ENCODE measurements at regions of chr4 and their contacts with region 1.

Region 1: DNA sequence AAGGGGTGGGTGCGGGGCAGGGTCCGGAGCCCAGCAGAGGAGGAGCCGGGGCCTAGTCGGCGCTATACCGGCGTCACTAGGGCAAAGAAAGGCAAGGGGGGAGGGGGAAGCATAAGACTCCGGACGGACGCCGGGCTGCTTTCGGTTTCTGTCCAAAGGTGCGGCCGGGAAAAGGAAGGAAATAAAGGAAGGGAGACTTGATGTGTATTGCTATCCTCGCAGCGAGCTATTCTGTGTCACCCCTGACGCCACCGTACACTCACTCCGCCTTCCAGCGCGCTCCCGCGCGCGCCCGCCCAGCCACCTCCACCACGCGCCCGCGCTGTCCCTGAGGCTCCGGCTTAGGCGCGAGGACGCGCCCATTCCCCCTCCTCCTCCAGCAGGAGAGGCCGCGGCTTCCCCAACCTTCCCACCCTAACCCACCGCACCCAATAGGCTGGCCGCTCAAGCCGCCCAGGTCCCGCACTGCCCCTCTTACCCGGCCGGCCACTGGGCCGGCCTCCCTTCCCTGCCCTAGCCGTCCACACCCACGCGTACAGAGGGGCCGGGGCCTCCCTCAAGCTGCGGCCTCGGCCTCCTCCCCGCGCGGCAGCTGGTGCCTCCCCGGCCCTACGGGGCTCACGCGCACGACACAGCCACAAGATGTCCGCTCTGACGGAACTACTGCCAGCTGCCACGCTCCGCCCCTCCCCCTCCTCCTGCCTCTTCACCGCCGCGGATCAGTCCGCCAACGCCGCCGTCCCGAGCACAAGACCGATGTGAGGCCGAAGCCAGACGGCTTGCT is at the start of gene UBE2D3:
- DNase-seq: peak; percentile 92
- H3K4me3 ChIP-seq: peak within 1 kb of the TSS; percentile 82 to 97 (median 89)
- H3K27ac ChIP-seq: peak within 1 kb of the TSS; percentile 98
- H3K4me1 ChIP-seq: peaks cover 32% of the 10 kb centered on the region
- H3K27me3 ChIP-seq: no peaks in the 10 kb centered on the region
- CTCF ChIP-seq: peak in 1 of 2 donors; percentile 15
- POLR2A ChIP-seq: peak; percentile 86
- total RNA-seq, gene UBE2D3: 279 and 288 TPM in 2 replicates

Region 2: GRCh38 chr4:102500696-102501446 is 326.2 kb before region 1 on chr4 and contains the start of gene NFKB1:
- CTCF ChIA-PET with region 1: no interaction called
- POLR2A ChIA-PET with region 1: no interaction called
- dilution Hi-C with region 1: no loop called
- intact Hi-C with region 1: loop called (anchors 2 kb)
- DNase-seq: peak; percentile 81
- H3K4me3 ChIP-seq: peak within 1 kb of the TSS; percentile 83 to 93 (median 88)
- H3K27ac ChIP-seq: peak within 1 kb of the TSS; percentile 90
- H3K4me1 ChIP-seq: peaks cover 22% of the 10 kb centered on the region
- H3K27me3 ChIP-seq: no peaks in the 10 kb centered on the region
- CTCF ChIP-seq: no peak
- POLR2A ChIP-seq: peak; percentile 54
- total RNA-seq, gene NFKB1: 41.4 and 42.0 TPM in 2 replicates

Region 3: DNA sequence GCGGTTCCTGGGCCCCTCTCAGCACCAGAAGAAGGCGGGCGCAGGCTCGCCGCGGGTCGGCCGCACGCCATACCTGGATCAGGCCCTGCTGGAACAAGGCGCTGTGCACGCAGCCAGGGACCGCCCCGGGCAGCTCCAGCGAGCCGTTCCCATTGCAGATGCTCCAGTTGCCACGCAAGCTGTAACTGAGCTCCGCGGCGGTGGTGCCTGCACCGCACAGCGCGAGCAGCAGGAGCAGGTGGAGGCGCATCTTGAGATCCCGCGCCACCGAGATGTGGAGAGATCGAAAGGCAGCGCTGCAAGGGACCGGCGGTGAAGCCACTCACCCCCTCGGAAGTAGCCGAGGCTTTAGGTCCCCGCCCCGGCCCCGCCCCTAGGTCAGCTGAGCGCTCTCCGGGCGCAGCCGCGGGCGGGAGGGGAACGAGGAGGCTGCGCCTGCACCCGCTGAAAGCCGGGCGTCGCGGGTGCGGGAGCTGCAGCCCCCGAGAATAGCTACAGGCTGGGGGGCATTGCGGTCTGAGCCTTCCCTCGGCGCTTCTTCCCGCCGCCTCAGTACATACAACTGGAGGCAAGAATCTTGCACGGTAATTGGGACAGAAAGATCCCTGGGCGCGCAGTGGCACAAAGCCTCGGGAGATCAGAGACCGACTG is 66.3 kb before region 1 on chr4 and contains the start of gene MANBA:
- CTCF ChIA-PET with region 1: interaction called, 3 read pairs
- POLR2A ChIA-PET with region 1: interaction called, 4 read pairs
- dilution Hi-C with region 1: no loop called
- intact Hi-C with region 1: loop called (anchors 2 kb)
- DNase-seq: peak; percentile 70
- H3K4me3 ChIP-seq: peak within 1 kb of the TSS; percentile 56 to 65 (median 59)
- H3K27ac ChIP-seq: no peak within 1 kb of the TSS
- H3K4me1 ChIP-seq: peaks cover 17% of the 10 kb centered on the region
- H3K27me3 ChIP-seq: peaks cover 0 to 2% of the 10 kb centered on the region in 2 experiments
- CTCF ChIP-seq: no peak
- POLR2A ChIP-seq: peak; percentile 51
- total RNA-seq, gene MANBA: 7.7 and 8.3 TPM in 2 replicates

Region 4: GRCh38 chr4:102815981-102816380 is 11.1 kb before region 1 on chr4:
- CTCF ChIA-PET with region 1: interaction called, 12 read pairs
- POLR2A ChIA-PET with region 1: interaction called, 16 read pairs
- dilution Hi-C with region 1: no loop called
- intact Hi-C with region 1: loop called (anchors 1 kb)
- DNase-seq: peak; percentile 19
- H3K4me3 ChIP-seq: no peak overlapping the region
- H3K27ac ChIP-seq: peak overlapping the region; percentile 5
- H3K4me1 ChIP-seq: peaks cover 44% of the 10 kb centered on the region
- H3K27me3 ChIP-seq: no peaks in the 10 kb centered on the region
- CTCF ChIP-seq: no peak
- POLR2A ChIP-seq: no peak

Region 5: GRCh38 chr4:103019308-103020124 is 192.4 kb after region 1 on chr4 and contains the start of gene SLC9B1:
- CTCF ChIA-PET with region 1: no interaction called
- POLR2A ChIA-PET with region 1: no interaction called
- dilution Hi-C with region 1: no loop called
- intact Hi-C with region 1: loop called (anchors 1 kb)
- DNase-seq: peak; percentile 96
- H3K4me3 ChIP-seq: peak within 1 kb of the TSS; percentile 28 to 62 (median 48)
- H3K27ac ChIP-seq: peak within 1 kb of the TSS; percentile 68
- H3K4me1 ChIP-seq: peaks cover 8% of the 10 kb centered on the region
- H3K27me3 ChIP-seq: no peaks in the 10 kb centered on the region
- CTCF ChIP-seq: no peak
- POLR2A ChIP-seq: peak; percentile 79
- total RNA-seq, gene SLC9B1: 0.49 TPM in 1 of 2 replicates, not detected in the other

Region 6: DNA sequence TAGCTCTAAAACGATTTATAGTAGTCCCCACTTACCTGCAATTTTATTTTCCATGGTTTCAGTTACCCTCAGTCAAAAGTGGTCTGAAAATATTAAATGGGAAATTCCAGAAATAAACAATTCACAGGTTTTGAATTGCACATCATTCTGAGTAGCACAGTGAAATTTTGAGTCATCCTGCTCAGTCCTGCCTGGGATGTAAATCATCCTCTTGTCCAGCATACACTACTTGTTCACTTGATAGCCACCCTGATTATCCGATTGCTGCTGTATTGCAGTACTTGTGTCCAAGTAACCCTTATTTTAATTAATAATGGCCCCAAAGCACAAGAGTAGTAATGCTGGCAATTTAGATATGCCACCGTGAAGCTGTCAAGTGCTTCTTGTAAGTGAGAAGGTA is 296.0 kb after region 1 on chr4:
- CTCF ChIA-PET with region 1: no interaction called
- POLR2A ChIA-PET with region 1: no interaction called
- dilution Hi-C with region 1: no loop called
- intact Hi-C with region 1: no loop called
- DNase-seq: no peak
- H3K4me3 ChIP-seq: no peak overlapping the region
- H3K27ac ChIP-seq: no peak overlapping the region
- H3K4me1 ChIP-seq: no peaks in the 10 kb centered on the region
- H3K27me3 ChIP-seq: no peaks in the 10 kb centered on the region
- CTCF ChIP-seq: no peak
- POLR2A ChIP-seq: no peak

Region 7: DNA sequence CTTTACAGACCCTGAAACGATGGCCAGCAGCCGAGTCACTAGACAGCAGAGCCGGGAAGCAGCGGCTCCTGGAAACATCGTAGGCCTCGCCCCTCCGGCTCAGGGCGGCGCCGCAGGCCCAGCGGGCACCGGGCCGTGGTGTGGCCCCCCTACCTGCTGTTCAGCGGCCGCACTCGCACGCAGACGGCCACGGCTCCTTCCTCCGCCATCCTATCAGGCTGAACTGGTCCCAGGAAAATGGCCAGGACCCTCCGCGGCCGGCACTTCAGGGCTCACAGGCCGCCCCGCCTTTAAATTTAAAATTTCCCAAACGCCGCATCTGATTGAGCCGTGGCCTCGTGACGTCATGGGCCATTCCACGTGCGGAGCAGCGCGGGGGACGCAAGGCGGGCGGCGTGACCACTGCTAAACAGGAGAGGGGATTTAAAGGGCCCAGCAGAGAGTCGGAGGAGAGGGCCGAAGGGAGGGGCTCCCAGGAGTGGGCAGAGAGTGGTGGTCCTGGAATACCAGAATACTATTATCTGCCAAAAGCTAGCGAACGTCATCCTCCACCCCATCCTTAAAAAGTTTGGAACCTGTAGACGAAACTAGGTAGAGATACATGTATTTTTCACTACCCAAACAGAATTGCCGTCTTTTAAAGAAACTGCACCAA is 371.2 kb after region 1 on chr4 and contains the start of gene CENPE:
- CTCF ChIA-PET with region 1: no interaction called
- POLR2A ChIA-PET with region 1: no interaction called
- dilution Hi-C with region 1: no loop called
- intact Hi-C with region 1: loop called (anchors 2 kb)
- DNase-seq: peak; percentile 94
- H3K4me3 ChIP-seq: peak within 1 kb of the TSS; percentile 74 to 93 (median 92)
- H3K27ac ChIP-seq: peak within 1 kb of the TSS; percentile 41
- H3K4me1 ChIP-seq: peaks cover 11% of the 10 kb centered on the region
- H3K27me3 ChIP-seq: peaks cover 0 to 2% of the 10 kb centered on the region in 2 experiments
- CTCF ChIP-seq: no peak
- POLR2A ChIP-seq: peak; percentile 52
- total RNA-seq, gene CENPE: 45.7 and 50.8 TPM in 2 replicates